Activated CD4-positive, alpha-beta T cell treated with anti-CD3 and anti-CD28 coated beads, Interleukin-2, amount 10 ng/mL, durations not matched to agents 24 days and 14 days (primary cell): ENCODE measurements at regions of chr2 and their contacts with region 1.

Region 1: GRCh38 chr2:238160206-238161109 is 1.7 kb downstream of the ERFE start:
- DNase-seq: no peak
- H3K4me3 Mint-ChIP-seq: no peak overlapping the region
- H3K27ac Mint-ChIP-seq: no peak overlapping the region
- H3K4me1 Mint-ChIP-seq: peaks cover 4% of the 10 kb centered on the region
- H3K27me3 Mint-ChIP-seq: peaks cover 36% of the 10 kb centered on the region

Region 2: DNA sequence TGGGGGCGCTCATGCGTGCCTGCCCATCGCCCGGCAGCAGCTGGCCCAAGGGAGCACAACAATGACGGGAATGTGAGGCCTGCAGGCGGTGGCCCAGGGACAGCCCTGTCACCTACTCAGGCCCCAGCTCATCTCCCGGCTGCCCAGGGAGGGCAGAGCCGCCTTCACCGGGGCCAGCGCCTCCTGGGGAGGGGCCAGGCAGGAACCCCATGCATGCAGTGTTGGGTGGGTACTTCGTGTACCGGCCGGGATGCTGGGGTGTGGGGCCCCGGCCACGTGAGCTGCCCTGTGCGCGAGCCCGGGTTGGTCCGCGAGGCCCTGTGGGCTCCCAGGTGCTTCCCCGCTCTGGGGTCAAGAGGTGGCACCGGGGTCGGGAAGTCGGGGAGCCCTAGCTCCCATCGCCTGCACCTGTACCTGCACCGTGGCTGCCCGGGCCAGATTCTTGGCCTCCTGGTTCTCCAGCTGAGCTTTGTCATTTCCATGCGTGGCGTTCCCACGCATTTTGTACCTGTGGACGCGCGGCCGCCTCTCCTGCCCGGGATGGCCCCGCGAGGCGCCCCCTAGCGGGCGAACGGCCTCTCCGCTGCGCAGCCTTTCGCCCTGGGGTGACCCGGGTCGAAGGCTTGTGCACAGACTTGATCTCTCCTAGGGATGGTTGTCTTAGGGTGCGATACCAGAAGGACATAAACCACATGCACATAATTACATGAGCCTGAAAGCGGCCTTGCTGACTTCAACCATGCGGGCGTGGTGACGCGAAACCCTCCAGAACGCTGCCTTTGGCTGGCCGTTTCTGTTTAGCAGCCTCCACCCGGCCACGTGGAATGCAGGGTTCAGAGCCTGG is 21.0 kb before region 1 on chr2:
- intact Hi-C with region 1: no loop called
- DNase-seq: peak; percentile 81
- H3K4me3 Mint-ChIP-seq: no peak overlapping the region
- H3K27ac Mint-ChIP-seq: no peak overlapping the region
- H3K4me1 Mint-ChIP-seq: no peaks in the 10 kb centered on the region
- H3K27me3 Mint-ChIP-seq: no peaks in the 10 kb centered on the region

Region 3: DNA sequence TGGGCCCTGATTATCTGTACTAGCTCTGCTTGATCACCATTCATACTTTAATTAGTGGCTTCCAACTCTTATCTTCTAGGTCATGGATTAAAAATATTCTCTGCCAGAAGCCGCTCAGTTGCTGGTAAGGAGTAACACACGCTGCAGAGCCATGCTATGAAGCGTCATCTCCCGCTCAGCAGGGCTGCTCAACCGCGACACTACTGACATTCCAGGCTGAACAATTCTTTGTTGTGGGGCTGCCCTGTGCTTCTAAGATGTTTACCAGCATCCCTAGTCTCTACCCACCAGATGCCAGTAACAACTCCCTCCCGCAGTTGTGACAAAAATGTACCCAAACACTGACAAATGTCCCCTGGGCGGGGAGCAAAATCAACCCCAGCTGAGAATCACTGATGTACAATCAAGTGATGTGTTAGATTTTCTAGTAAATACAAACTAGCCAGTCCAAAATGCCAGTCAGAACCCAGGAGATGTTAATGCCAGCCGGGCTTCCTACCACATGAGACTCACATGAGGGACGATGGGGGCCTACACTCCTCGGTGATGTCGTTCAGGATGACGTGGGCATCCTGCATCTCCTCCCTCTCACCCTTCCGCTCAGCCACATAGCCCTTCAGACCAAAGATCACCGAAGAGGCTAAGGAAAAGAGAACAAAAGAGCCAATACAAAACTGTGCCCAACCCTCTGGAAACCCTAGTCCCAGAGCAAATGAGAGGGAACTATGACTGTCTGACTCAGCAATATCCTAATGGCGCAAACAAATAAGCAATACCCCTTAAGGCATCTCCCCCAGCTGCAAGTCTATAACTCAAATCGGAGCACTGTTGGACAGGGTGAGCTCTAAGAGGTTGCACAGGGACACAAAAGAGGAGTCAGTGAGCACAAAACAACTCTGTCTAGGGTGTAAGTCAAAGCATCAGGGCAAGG is 27.4 kb after region 1 on chr2:
- intact Hi-C with region 1: no loop called
- DNase-seq: no peak
- H3K4me3 Mint-ChIP-seq: no peak overlapping the region
- H3K27ac Mint-ChIP-seq: no peak overlapping the region
- H3K4me1 Mint-ChIP-seq: peaks cover 8% of the 10 kb centered on the region
- H3K27me3 Mint-ChIP-seq: no peaks in the 10 kb centered on the region

Region 4: DNA sequence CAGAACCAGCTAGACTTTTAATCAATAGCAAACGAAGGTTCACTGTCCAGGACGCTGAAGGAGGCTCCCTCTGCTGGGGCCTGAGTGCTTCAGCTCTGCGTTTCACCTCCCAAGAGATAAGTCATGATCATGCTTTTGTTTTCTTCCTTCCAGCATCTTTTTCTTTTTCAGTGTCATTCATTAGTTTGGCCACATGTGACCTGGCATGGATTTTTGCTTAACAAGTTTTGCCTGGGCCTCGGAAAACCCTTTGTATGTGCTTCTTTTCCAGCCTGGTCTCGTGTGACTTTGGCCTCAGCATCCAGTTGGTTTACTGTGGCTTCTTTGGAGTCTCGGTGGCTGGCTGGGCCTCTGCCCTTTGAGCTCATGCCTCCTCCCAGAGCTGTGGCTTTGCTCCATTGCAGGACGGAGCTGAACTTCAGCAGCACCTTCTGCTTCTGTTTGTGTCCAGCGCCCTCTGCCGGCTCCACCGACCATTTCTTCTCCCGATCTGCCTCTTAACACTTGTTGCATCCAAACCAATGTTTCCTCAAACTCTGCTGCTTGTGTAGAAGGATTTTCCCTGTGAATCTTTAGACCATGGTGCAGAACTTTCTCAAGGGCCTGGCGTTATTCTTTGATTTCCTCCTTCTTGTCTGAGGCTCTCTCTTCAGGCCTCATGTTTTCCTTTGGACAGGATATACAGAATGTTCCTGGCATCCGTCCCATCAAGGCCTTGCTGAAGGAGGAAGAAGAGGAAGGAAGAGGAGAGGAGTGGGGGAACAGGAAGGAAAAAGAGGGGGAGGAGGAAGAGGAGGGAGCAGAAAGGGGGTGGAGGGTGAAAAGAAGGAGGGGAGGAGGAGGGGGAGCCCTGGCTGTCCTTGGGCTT is 103.0 kb after region 1 on chr2:
- intact Hi-C with region 1: loop called (anchors 5 kb)
- DNase-seq: peak; percentile 92
- H3K4me3 Mint-ChIP-seq: no peak overlapping the region
- H3K27ac Mint-ChIP-seq: no peak overlapping the region
- H3K4me1 Mint-ChIP-seq: peaks cover 11% of the 10 kb centered on the region
- H3K27me3 Mint-ChIP-seq: no peaks in the 10 kb centered on the region